GM10248 (cell line): ENCODE measurements at regions of chr6 and their contacts with region 1.

Region 1: DNA sequence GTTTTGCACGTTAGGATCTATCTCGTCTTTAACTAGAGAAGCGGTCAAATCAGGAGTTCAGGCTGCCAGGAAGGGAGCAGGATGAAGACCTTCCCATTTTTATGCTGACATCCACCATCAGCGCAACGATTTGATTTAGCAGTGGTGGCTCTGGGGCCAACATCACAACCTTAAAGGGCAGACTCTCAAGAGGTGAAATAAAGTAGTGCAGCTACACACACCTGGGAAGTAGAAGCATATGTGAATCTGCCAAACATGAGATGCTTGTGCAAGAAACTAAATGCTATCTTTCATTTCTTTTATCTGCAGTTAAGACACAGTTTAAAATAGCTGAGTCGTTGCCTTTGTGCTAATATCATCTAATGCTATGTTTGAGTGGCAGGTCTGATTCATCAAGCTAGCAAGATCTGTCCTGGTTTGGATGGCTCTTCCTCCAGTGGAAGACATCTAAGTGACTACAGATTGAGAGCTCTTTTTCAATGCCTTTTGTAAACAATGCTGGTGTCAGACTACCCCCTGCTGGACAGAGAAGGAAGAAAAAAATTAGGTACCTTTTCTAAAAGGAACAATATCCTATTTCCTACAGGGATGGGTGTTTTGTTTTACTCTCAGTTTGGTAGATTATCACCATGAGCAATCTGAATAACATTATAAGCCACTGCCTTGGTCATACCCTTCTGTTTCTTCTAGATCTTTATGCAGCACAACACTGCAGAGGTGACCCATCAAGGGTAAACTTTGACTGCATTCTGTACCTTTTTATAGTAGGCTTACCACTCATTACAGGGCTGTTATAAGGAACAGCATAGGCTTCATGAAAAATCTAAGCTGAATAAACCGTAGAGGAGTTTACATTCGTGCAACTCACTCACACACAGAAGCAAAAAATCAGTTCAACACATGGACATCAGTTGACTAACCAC is 171.6 kb upstream of the FBXL4 start:
- DNase-seq: peak; percentile 35
- CTCF ChIP-seq: peak; percentile 60

Region 2: GRCh38 chr6:98887650-98888049 is 231.7 kb before region 1 on chr6:
- CTCF ChIA-PET with region 1: no interaction called
- POLR2A ChIA-PET with region 1: no interaction called
- DNase-seq: no peak
- CTCF ChIP-seq: no peak

Region 3: GRCh38 chr6:98920904-98921431 is 198.4 kb before region 1 on chr6:
- CTCF ChIA-PET with region 1: no interaction called
- POLR2A ChIA-PET with region 1: no interaction called
- DNase-seq: peak; percentile 18
- CTCF ChIP-seq: no peak

Region 4: DNA sequence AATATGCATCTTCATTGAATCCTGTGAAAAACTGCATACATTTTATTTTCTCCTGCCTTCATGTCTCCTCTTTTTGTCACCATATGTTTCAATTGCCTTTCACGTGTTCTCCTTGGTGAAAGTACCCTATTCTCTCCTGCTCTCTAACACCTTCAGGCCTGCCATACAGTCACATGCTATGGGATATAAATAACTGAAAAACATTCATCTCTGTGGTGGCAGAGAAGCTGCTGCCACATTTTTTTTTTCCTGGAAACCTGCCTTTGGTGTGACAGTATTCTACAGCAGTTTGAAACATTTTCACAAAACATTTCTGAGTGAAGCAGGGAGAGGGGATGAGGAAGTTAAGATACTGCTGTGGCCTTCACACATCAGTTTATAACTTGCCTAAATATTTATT is 126.8 kb before region 1 on chr6:
- CTCF ChIA-PET with region 1: no interaction called
- POLR2A ChIA-PET with region 1: no interaction called
- DNase-seq: no peak
- CTCF ChIP-seq: no peak

Region 5: DNA sequence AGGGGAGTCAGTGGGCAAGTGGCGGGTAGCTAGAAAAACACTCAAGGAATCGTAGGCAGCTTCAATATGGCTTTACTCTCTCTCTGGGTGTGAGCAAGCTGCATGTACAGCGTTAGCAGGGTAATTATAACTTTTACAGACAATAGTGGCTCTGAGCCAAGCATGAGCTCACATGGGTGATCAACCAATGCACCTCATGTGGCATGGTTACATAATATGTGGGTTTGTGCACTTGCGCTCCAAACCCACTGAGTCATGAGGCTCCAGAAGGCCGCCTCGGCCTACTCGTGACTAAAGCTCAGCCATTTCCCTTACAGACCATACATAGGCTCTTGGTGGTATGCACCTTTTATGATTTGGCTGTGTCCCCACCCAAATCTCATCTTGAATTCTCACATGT is 93.2 kb before region 1 on chr6:
- CTCF ChIA-PET with region 1: no interaction called
- POLR2A ChIA-PET with region 1: no interaction called
- DNase-seq: no peak
- CTCF ChIP-seq: no peak

Region 6: DNA sequence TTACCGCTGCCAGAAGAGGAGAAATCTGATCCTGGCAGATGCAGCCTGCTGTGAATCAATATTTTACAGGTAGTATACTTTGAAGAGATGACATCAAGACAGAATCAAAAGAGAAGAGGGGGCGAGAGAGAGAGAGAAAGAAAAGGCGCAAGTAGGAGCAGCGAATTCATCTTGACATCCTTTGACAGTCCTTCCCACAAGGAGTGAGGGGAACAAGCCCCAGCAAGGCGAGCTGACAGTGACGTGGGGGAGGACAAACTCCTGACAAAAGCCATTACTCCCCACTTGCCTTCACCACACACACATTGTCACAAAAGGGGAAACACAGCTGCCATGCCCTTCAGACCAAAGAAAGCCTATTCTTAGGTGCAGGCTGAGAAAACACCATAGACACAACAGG is 25.6 kb before region 1 on chr6:
- CTCF ChIA-PET with region 1: interaction called, 17 read pairs
- POLR2A ChIA-PET with region 1: no interaction called
- DNase-seq: no peak
- CTCF ChIP-seq: no peak

Region 7: GRCh38 chr6:99130897-99131873 is 11.8 kb after region 1 on chr6:
- CTCF ChIA-PET with region 1: interaction called, 12 read pairs
- POLR2A ChIA-PET with region 1: no interaction called
- DNase-seq: no peak
- CTCF ChIP-seq: no peak